ENCODE measurements at regions of chr6 and their contacts with region 1.

Region 1: GRCh38 chr6:153023977-153024708 is 21.6 kb upstream of the MTRF1L start:
- DNase-seq: no peak
- H3K4me3 ChIP-seq: no peak overlapping the region
- H3K27ac ChIP-seq: no peak overlapping the region
- H3K4me1 ChIP-seq: no peaks in the 10 kb centered on the region
- H3K27me3 ChIP-seq: no peaks in the 10 kb centered on the region
- CTCF ChIP-seq: peak; percentile 50 to 78 (median 69)

Region 2: DNA sequence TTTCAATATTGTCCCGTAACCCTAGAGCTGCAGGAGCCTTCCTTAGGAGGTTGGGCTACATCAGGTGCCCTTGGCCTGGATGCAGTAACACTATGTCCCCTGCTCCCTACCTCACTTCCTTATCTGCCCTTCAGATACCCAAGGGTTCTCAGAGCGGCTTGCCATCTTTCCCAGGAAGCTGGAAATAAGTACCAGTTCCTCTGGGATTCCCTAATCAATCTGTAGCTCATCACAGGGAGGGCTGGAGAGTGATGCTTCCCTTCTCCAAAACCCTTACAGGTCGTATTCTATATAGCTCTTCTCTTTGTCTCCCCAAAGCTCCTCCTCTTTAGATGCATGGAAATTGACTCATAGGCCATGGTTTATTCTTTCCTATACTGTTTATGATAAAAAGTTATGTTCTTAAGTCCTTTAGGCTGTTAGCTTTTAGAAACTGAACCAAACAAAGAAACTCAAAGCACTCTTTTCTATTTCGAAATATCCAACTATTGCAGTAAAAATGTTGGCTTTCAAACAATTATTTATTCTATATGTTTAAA is 322.2 kb before region 1 on chr6:
- intact Hi-C with region 1: no loop called
- DNase-seq: no peak
- H3K4me3 ChIP-seq: no peak overlapping the region
- H3K27ac ChIP-seq: no peak overlapping the region
- H3K4me1 ChIP-seq: no peaks in the 10 kb centered on the region
- H3K27me3 ChIP-seq: no peaks in the 10 kb centered on the region
- CTCF ChIP-seq: no peak

Region 3: GRCh38 chr6:152748843-152749242 is 275.3 kb before region 1 on chr6:
- intact Hi-C with region 1: loop called (anchors 5 kb)
- DNase-seq: no peak
- H3K4me3 ChIP-seq: no peak overlapping the region
- H3K27ac ChIP-seq: no peak overlapping the region
- H3K4me1 ChIP-seq: no peaks in the 10 kb centered on the region
- H3K27me3 ChIP-seq: no peaks in the 10 kb centered on the region
- CTCF ChIP-seq: no peak

Region 4: DNA sequence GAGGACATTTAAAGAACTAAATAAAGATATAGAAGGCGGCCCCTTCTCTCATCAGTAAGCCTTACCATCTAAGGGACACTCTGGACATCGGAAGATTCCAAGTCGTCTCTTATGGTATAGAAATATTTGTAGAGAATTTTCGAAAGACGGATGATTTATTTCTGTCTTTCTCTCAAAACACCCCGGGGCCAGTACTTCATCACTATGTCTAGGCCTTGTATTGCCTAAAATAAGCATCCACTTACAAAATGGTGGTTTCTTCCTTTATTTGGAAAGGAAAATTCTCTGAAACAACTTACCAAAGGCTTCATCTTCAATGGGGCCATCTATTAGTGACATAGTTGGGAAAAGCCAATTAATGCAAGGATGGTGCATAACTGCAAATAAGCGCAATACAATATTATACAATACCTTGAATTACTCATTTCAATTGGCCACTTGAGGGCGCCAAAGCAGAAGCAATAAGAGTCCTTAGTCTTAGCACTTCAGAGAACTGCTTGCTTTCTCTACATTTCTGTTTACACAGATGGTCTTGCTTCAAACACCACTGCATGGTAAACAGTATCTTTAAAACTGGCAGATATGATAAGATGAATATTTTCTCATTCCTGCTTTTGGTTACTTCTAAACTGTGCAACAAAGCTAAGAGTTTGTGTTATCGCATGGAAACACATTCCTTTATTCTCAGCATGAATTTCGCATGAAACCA is 160.4 kb before region 1 on chr6:
- intact Hi-C with region 1: loop called (anchors 1 kb)
- DNase-seq: peak in 1 of 2 donors; percentile 74
- H3K4me3 ChIP-seq: no peak overlapping the region
- H3K27ac ChIP-seq: no peak overlapping the region
- H3K4me1 ChIP-seq: no peaks in the 10 kb centered on the region
- H3K27me3 ChIP-seq: no peaks in the 10 kb centered on the region
- CTCF ChIP-seq: peak; percentile 41 to 71 (median 57)

Region 5: DNA sequence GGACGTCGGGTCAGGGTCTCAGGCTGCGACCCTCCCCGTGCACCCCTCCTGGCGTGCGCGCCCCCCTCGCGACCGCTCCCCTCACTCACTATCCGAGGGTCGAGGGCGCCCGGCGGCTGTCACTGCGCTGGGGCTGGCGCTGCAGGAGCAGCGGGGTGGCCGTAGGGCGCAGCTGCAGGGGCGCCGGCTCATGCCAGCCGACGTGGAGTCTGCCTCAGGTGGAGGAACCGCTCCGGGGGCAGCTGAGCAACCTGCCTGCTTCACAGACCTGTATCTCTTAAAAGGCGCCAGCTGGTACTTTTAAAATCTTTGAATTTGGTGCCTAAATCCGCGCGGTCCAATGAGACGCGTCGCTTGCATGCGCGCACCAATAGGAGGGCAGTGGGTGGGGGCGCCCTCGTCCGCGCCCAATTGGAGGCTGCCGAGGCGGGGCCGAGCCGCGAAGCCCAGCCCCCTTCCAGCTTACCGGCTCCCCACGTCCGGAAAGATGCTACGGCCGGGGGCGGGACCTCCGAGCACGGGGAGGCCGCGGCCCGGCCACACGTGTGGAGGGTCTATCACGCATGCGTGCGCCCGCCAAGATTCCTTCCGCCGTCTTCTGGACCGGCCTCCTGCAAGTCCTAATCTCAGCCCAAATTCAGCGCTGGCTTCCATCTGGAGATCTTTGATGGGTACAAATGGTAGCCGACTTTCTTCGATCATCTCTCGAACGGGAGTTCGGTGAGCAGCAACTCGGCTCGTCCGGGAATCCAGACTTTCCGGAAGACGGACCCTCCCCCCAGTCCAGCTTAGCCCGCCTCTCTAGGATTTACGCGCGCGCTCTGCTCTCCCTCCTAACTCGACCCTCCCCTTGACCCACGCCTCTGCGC is 41.1 kb before region 1 on chr6 and contains the start of gene FBXO5:
- intact Hi-C with region 1: loop called (anchors 5 kb)
- DNase-seq: peak; percentile 92 to 99
- H3K4me3 ChIP-seq: peak within 1 kb of the TSS; percentile 63 to 93
- H3K27ac ChIP-seq: peak within 1 kb of the TSS; percentile 85 to 90
- H3K4me1 ChIP-seq: peaks cover 12 to 13% of the 10 kb centered on the region in 2 donors
- H3K27me3 ChIP-seq: no peaks in the 10 kb centered on the region
- CTCF ChIP-seq: no peak
- total RNA-seq, gene FBXO5: not detected

Measured in ascending aorta (tissue), 2 donors.